ENCODE measurements at regions of chr9 and their contacts with region 1.

Region 1: DNA sequence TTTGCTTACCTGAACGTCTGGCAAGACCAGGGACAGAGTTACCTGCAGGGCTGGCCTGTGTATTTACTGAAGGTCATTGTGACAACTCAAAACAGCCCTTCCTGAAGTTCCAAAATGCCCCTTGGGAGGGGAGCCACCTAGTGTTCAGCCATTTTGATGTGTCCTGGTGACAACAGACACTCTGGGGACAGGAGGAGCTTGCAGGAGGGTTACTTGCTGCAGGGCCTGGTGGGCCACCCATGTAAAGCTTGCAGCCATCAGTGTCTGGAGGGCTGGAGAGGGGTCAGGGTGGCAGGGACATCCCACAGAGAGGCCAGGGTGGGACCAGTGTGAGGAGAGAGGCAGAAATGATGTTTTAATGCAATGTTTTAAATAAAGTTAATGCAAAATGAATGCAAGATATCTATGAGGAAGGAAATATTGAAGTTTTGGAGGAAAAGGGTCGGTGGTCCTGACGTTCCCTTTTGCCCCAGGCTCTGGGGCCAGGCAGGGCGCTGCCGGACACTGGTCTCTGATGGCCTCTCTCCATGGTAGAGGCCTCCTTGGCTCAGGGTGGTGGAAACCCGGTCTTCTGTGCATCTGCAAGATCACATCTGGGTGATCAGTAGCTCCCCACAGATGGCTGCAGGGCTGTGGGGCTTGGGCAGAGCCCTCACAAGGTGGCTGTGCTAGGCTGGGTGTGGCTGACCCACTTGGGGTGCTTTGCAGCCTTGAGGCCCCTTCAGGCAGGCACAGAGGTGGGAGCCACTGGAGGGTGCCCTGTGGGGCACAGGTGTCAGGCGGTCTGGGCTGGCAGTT is 53.7 kb upstream of the RNU6ATAC start:
- DNase-seq: no peak
- H3K4me3 ChIP-seq: no peak overlapping the region
- H3K27ac ChIP-seq: no peak overlapping the region
- H3K4me1 ChIP-seq: peaks cover 6% of the 10 kb centered on the region
- H3K27me3 ChIP-seq: no peaks in the 10 kb centered on the region
- CTCF ChIP-seq: no peak

Region 2: DNA sequence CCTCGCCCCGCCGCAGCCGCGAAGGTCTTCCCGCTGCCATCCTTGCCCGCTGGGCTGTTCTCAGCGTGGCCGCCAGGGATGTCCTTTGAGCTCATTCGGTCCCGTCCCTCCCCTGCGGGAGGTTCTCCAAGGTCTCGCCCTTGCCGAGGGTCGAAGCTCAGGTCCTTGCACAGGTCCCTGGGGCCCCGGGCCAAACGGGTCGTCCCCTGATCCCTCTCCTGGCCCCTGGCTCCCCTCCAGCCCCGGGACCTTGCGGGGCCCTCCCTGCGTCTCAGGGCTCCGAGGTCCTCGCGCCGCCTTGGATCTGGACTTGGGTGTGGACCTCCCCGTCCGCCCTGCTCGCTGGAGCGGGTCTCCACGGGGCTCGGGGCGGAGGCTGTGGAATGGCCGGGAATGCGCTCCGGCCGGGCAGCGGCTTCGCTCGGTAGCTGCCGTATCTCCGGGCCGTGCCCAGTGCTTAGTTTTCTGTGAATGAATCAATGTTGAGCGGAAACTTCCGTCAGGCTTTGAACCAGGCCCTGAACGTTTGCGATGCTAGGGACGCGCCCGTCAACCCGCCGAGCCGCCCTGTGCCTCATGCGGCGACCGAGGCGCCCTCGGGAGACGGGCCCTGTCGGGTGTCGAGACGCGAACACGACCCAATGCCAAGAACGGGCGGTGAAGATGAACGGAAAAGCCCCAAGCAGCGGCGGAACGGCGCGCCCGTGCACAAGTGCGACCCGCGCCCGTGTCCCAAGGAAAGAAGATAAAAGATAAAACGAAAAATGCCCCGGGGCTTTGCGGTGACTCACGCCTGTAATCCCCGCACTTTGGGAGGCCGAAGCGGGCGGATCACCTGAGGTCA is 54.5 kb before region 1 on chr9:
- CTCF ChIA-PET with region 1: no interaction called
- dilution Hi-C with region 1: no loop called
- in situ Hi-C with region 1: no loop called
- intact Hi-C with region 1: no loop called
- DNase-seq: peak; percentile 25
- H3K4me3 ChIP-seq: peak overlapping the region; percentile 24 to 45 (median 41)
- H3K27ac ChIP-seq: no peak overlapping the region
- H3K4me1 ChIP-seq: peaks cover 5% of the 10 kb centered on the region
- H3K27me3 ChIP-seq: no peaks in the 10 kb centered on the region
- CTCF ChIP-seq: peak in 1 of 2 donors; percentile 13

Region 3: GRCh38 chr9:134525841-134526595 is 308.0 kb after region 1 on chr9:
- CTCF ChIA-PET with region 1: no interaction called
- dilution Hi-C with region 1: loop called (anchors 10 kb)
- in situ Hi-C with region 1: no loop called
- intact Hi-C with region 1: no loop called
- DNase-seq: no peak
- H3K4me3 ChIP-seq: no peak overlapping the region
- H3K27ac ChIP-seq: no peak overlapping the region
- H3K4me1 ChIP-seq: no peaks in the 10 kb centered on the region
- H3K27me3 ChIP-seq: no peaks in the 10 kb centered on the region
- CTCF ChIP-seq: no peak

Measured in mammary epithelial cell (primary cell).